ENCODE measurements at regions of chr2 and their contacts with region 1.

Region 1: DNA sequence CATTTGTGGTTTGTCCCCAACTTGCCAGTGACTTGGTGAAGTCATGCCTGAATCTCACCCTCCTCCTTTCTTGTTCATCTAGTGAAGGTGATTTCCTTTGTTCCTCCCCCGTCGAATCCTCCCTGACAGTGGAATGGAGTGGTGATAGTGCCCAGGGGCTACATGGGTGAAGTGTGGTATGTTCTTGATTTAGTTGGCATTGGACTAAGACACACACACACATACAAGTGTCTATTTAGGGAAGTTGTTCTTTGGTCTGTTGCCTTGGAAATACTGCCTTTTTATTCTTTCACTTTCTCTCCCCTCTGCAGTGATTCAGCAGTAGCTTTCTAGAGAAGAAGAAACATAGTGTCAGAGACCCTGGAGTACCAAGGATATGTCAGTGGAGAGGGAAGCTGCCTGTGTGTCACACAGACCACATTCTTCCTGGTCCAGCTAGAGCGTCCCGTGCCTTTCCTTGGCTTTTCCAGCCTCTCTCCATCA is 10.9 kb downstream of the INPP4A start:
- DNase-seq: peak; percentile 80
- ATAC-seq: peak; percentile 85
- H3K4me3 ChIP-seq: peak overlapping the region in 3 of 5 experiments; percentile 10 to 44 (median 15)
- H3K4me3 Mint-ChIP-seq: peak overlapping the region; percentile 74
- H3K27ac ChIP-seq: peak overlapping the region; percentile 11 to 51
- H3K27ac Mint-ChIP-seq: peak overlapping the region; percentile 83
- H3K4me1 ChIP-seq: peaks cover 49 to 67% of the 10 kb centered on the region in 2 donors
- H3K4me1 Mint-ChIP-seq: peaks cover 59% of the 10 kb centered on the region
- H3K27me3 ChIP-seq: peaks cover 0 to 3% (median 0%) of the 10 kb centered on the region in 4 experiments
- H3K27me3 Mint-ChIP-seq: no peaks in the 10 kb centered on the region
- CTCF ChIP-seq: no peak

Region 2: DNA sequence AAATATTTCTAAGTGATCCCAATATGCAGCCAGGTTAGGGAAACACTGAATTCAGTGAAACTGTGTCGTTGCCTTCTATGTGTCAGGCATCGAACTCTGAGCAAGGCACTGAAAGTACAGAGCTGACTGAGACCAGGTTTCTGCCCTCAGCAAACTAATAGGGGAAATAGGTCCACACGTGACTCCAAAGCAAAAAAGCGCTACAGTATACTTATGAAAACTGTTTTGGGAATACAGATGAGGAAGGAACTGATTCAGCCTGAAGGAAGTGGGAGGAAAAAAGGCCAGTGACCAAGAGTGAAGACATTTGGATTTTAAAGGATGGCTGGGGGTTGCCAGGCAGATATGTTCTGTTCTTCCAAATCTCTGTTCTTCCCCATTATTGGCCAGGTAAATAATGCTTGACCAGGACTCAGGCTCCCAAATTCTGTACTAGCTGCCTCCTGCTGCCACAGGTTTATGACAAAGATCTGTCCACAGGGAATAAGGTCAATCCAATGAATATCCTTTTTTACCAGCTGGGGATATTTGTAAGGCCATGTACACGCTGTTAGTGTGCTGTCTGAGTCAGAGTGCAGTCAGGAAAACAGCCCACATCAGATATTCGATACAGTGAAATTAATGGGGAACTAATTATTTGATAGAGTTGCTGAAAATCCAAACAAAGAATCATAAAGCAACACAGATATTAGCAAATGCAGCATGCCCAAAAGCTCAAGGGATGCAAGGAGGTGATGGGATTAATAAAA is 35.4 kb before region 1 on chr2:
- CTCF ChIA-PET with region 1: no interaction called
- POLR2A ChIA-PET with region 1: no interaction called
- intact Hi-C with region 1: no loop called
- DNase-seq: no peak
- ATAC-seq: no peak
- H3K4me3 ChIP-seq: no peak overlapping the region
- H3K4me3 Mint-ChIP-seq: no peak overlapping the region
- H3K27ac ChIP-seq: no peak overlapping the region
- H3K27ac Mint-ChIP-seq: no peak overlapping the region
- H3K4me1 ChIP-seq: no peaks in the 10 kb centered on the region
- H3K4me1 Mint-ChIP-seq: no peaks in the 10 kb centered on the region
- H3K27me3 ChIP-seq: peaks cover 0 to 4% (median 0%) of the 10 kb centered on the region in 4 experiments
- H3K27me3 Mint-ChIP-seq: peaks cover 23% of the 10 kb centered on the region
- CTCF ChIP-seq: no peak

Region 3: GRCh38 chr2:98465456-98466226 is 10.1 kb after region 1 on chr2:
- CTCF ChIA-PET with region 1: interaction called, 12 read pairs
- POLR2A ChIA-PET with region 1: no interaction called
- intact Hi-C with region 1: loop called (anchors 1 kb)
- DNase-seq: peak; percentile 40
- ATAC-seq: no peak
- H3K4me3 ChIP-seq: peak overlapping the region in 1 of 5 experiments; percentile 12
- H3K4me3 Mint-ChIP-seq: peak overlapping the region; percentile 64
- H3K27ac ChIP-seq: peak overlapping the region; percentile 31 to 58
- H3K27ac Mint-ChIP-seq: peak overlapping the region; percentile 82
- H3K4me1 ChIP-seq: peaks cover 56 to 68% of the 10 kb centered on the region in 2 donors
- H3K4me1 Mint-ChIP-seq: peaks cover 63% of the 10 kb centered on the region
- H3K27me3 ChIP-seq: no peaks in the 10 kb centered on the region
- H3K27me3 Mint-ChIP-seq: no peaks in the 10 kb centered on the region
- CTCF ChIP-seq: no peak

Region 4: GRCh38 chr2:98560256-98560771 is 104.8 kb after region 1 on chr2:
- CTCF ChIA-PET with region 1: no interaction called
- POLR2A ChIA-PET with region 1: no interaction called
- intact Hi-C with region 1: loop called (anchors 5 kb)
- DNase-seq: no peak
- ATAC-seq: no peak
- H3K4me3 ChIP-seq: no peak overlapping the region
- H3K4me3 Mint-ChIP-seq: no peak overlapping the region
- H3K27ac ChIP-seq: no peak overlapping the region
- H3K27ac Mint-ChIP-seq: peak overlapping the region; percentile 15
- H3K4me1 ChIP-seq: peaks cover 8 to 29% of the 10 kb centered on the region in 2 donors
- H3K4me1 Mint-ChIP-seq: peaks cover 29% of the 10 kb centered on the region
- H3K27me3 ChIP-seq: no peaks in the 10 kb centered on the region
- H3K27me3 Mint-ChIP-seq: no peaks in the 10 kb centered on the region
- CTCF ChIP-seq: no peak